HAP-1 (cell line): ENCODE measurements at regions of chr12 and their contacts with region 1.

Region 1: DNA sequence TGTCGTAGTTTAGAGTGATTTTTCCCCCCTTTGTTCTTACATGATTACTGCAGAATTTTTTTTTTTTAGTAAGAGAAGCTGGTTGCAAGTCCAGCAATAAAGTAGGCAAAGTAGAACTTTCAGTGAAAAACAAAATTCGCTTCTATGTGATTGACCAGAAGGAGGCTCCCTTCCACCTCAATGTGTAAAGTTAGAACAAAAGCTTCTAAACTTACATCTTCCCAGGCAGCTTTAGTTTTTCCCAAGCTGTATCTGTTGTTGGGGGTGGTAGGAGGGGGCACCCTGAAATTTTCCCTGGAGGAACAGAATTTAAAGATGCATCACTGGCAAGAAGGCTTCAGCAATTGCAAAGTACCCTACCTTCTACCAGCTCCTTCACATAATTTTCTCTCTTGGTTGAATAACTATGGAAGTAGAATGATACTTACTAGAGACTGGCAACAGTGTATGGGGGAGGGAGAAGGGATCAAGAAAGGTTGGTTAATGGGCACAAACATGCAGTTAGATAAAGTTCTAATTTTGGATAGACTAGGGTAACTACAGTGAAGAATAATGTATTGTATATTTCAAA is 87.3 kb upstream of the E2F7 start:
- DNase-seq: peak in 1 of 2 experiments; percentile 4
- H3K4me3 ChIP-seq: no peak overlapping the region
- H3K4me1 ChIP-seq: no peaks in the 10 kb centered on the region
- H3K27me3 ChIP-seq: no peaks in the 10 kb centered on the region; the same call in 1 of the 2 replicates

Region 2: GRCh38 chr12:77685112-77685511 is 532.4 kb after region 1 on chr12:
- in situ Hi-C with region 1: loop called (anchors 25 kb)
- DNase-seq: peak; percentile 71 to 77
- H3K4me3 ChIP-seq: no peak overlapping the region
- H3K4me1 ChIP-seq: no peaks in the 10 kb centered on the region
- H3K27me3 ChIP-seq: no peaks in the 10 kb centered on the region